H1 (cell line): ENCODE measurements at regions of chr6 and their contacts with region 1.

Region 1: GRCh38 chr6:149233056-149233715 is 84.3 kb upstream of the TAB2 start:
- DNase-seq: no peak
- H3K4me3 ChIP-seq: no peak overlapping the region
- H3K27ac ChIP-seq: no peak overlapping the region
- H3K4me1 ChIP-seq: peaks cover 0 to 6% (median 2%) of the 10 kb centered on the region in 4 experiments; a peak in 3 of 7 replicates
- H3K27me3 ChIP-seq: no peaks in the 10 kb centered on the region; a peak in 1 of 7 replicates
- CTCF ChIP-seq: no peak
- EP300 ChIP-seq: no peak
- POLR2A ChIP-seq: no peak
- RAD21 ChIP-seq: no peak

Region 2: GRCh38 chr6:149140137-149140909 is 92.9 kb before region 1 on chr6:
- CTCF ChIA-PET with region 1: no interaction called
- POLR2A ChIA-PET with region 1: no interaction called
- DNase-seq: no peak
- H3K4me3 ChIP-seq: no peak overlapping the region
- H3K27ac ChIP-seq: no peak overlapping the region
- H3K4me1 ChIP-seq: no peaks in the 10 kb centered on the region
- H3K27me3 ChIP-seq: no peaks in the 10 kb centered on the region
- CTCF ChIP-seq: no peak
- EP300 ChIP-seq: no peak
- POLR2A ChIP-seq: no peak
- RAD21 ChIP-seq: no peak

Region 3: DNA sequence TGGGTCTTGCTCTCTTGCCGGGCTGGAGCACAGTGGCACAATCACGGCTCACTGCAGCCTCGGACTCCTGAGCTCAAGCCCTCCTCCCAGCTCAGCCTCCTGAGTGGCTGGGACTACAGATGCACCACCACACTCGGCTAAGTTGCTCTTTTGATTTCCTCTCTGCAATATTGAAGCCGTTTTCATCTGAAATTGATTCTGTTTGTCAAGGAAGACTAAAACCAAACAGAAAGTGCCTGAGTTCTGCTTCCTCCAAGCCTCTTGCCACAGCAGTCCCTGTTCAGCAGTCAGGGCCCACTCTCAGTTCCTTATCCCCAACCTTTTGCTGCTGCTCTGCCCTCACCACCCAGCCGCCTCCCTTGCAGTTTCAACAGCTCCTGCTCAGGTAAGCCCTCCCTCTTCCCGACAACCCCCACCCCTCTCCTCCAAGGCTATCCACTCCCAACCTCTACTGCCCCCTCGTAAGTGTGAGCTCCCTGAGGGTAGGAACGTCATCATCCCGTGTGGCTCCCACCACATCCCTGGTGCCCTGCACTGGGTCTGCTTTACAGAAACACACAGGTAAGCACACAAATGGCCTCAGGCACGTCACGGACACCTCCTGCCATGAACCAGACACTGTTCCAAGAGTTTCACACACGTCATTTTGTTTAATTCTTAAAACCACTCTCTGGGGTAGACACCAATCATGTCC is 13.7 kb after region 1 on chr6:
- CTCF ChIA-PET with region 1: interaction called, 10 read pairs
- POLR2A ChIA-PET with region 1: no interaction called
- DNase-seq: no peak
- H3K4me3 ChIP-seq: no peak overlapping the region
- H3K27ac ChIP-seq: no peak overlapping the region
- H3K4me1 ChIP-seq: no peaks in the 10 kb centered on the region; a peak in 1 of 7 replicates
- H3K27me3 ChIP-seq: no peaks in the 10 kb centered on the region
- CTCF ChIP-seq: no peak
- EP300 ChIP-seq: no peak
- POLR2A ChIP-seq: no peak
- RAD21 ChIP-seq: no peak

Region 4: DNA sequence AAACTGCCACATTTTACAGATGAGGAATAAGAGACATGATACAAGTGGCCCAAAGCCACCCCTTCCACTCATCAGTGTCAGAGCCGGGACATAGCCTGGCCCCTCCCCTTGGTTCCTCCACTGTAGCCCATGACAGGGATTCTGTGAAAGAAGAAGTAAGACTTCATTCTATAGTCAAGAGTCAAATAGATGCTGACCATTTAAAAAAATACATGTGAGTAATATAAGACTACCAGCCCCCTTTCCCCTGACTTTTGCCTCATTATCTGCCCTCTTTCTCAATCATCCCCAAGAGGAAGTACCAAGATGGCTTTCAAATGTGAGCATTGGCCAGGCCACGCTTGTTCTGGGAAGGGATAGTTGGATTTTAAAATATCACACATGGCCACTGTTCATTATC is 26.6 kb after region 1 on chr6:
- CTCF ChIA-PET with region 1: no interaction called
- POLR2A ChIA-PET with region 1: no interaction called
- DNase-seq: no peak
- H3K4me3 ChIP-seq: no peak overlapping the region
- H3K27ac ChIP-seq: no peak overlapping the region
- H3K4me1 ChIP-seq: no peaks in the 10 kb centered on the region
- H3K27me3 ChIP-seq: no peaks in the 10 kb centered on the region
- CTCF ChIP-seq: no peak
- EP300 ChIP-seq: no peak
- POLR2A ChIP-seq: no peak
- RAD21 ChIP-seq: no peak